Body of pancreas (tissue), 4 donors: ENCODE measurements at regions of chr4 and their contacts with region 1.

Region 1: GRCh38 chr4:183249857-183250256 is 70.2 kb downstream of the CLDN22 start:
- DNase-seq: peak; percentile 46 to 61 (median 52)
- ATAC-seq: peak; percentile 77
- H3K4me3 ChIP-seq: no peak overlapping the region
- H3K27ac ChIP-seq: peak overlapping the region in 1 of 4 donors; percentile 5
- H3K4me1 ChIP-seq: peaks cover 28% of the 10 kb centered on the region
- H3K27me3 ChIP-seq: no peaks in the 10 kb centered on the region
- CTCF ChIP-seq: peak in 5 of 7 experiments; percentile 31 to 69 (median 63)
- POLR2A ChIP-seq: no peak

Region 2: DNA sequence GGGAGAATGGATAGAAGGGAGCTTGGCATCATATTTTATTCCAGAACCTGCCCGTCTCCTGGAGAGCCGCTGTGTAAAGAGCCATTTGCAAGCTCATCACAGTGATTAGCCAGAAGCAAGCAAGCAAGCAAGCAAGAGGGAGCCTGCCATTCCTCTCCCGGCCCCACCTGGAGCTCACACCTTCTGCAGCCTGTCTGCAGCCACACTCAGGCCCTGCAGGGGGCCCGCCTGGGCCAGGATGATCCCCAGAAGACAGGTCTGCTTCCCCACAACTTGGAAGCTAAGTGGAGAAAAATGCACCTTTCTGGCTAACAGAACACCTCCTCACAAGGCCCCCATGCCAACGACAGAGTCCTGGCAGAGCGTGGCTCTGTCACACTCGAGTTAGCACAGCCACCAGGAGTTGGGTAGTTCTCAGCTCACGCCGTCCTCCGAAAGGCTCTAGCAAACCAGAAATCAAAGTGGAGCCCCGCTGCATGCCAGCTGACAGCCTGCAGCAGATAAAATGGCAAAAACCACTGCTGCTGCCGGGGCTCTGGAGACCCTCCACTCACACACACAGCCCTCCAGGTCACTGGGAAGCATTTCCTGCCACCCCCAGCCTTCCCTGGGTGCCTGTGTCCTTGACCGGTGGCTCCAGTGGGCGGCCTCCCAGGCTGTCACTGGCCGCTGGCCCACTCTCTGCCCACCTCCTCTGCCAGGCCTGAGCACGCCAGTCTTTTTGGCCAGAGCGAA is 387.5 kb before region 1 on chr4:
- intact Hi-C with region 1: no loop called
- DNase-seq: peak in 3 of 4 donors; percentile 25 to 67 (median 32)
- ATAC-seq: peak; percentile 54
- H3K4me3 ChIP-seq: no peak overlapping the region
- H3K27ac ChIP-seq: peak overlapping the region; percentile 70 to 89 (median 79)
- H3K4me1 ChIP-seq: peaks cover 24% of the 10 kb centered on the region
- H3K27me3 ChIP-seq: no peaks in the 10 kb centered on the region
- CTCF ChIP-seq: peak in 4 of 7 experiments; percentile 33 to 43 (median 38)
- POLR2A ChIP-seq: no peak

Region 3: DNA sequence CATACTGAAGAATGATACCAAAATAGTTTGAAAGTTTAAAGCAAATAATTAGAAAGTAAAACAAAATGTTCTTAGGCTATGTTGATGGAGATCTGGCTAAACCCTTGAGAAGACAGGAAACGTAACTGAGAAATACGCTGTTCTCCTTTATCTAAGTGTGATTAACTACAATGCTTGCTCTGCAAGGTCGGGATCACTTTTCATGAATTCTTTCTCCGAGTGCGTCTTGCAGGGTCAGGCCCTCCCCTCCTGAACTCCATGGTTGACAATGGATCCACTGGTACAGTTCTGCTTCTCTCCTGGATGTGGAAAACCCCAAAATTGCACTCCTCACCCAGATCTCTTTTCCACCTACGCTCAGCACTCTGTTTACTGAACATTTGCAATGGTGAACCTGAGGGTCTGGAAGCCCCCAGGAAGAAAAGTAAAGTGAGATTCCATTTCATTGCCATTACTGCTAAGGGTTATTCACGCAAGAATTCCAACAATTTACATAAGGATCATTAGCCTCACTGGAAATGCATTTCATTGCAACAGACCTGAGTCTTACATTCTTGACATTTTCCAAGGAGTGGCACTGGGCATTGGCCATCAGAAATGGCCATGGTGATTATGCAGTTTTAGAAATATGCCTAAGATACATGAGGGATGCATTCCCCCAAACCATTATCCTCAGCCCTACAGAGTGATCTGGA is 175.4 kb before region 1 on chr4:
- intact Hi-C with region 1: loop called (anchors 5 kb)
- DNase-seq: no peak
- ATAC-seq: no peak
- H3K4me3 ChIP-seq: no peak overlapping the region
- H3K27ac ChIP-seq: no peak overlapping the region
- H3K4me1 ChIP-seq: no peaks in the 10 kb centered on the region
- H3K27me3 ChIP-seq: no peaks in the 10 kb centered on the region
- CTCF ChIP-seq: no peak
- POLR2A ChIP-seq: no peak

Region 4: DNA sequence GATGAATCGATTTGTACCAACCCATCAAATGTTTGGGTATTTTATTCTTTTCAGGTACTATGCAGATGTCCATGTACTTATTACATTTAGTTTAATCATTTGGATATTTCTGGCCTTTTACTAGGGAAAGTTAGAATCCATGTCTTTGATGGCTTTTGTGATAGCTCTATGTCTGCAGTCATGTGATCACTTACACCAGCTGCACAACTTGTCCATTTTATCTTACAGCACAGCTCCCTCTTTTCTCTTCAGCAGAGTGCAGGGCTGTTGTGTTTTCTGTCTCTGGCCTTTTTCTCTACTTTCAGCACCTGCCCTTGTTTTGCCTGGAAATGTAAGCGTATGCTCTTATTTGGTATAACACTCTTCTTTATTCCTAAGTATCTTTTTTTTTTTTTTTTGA is 120.2 kb before region 1 on chr4:
- intact Hi-C with region 1: no loop called
- DNase-seq: no peak
- ATAC-seq: no peak
- H3K4me3 ChIP-seq: no peak overlapping the region
- H3K27ac ChIP-seq: no peak overlapping the region
- H3K4me1 ChIP-seq: peaks cover 17% of the 10 kb centered on the region
- H3K27me3 ChIP-seq: no peaks in the 10 kb centered on the region
- CTCF ChIP-seq: no peak
- POLR2A ChIP-seq: no peak